ENCODE measurements at regions of chr16 and their contacts with region 1.

Region 1: DNA sequence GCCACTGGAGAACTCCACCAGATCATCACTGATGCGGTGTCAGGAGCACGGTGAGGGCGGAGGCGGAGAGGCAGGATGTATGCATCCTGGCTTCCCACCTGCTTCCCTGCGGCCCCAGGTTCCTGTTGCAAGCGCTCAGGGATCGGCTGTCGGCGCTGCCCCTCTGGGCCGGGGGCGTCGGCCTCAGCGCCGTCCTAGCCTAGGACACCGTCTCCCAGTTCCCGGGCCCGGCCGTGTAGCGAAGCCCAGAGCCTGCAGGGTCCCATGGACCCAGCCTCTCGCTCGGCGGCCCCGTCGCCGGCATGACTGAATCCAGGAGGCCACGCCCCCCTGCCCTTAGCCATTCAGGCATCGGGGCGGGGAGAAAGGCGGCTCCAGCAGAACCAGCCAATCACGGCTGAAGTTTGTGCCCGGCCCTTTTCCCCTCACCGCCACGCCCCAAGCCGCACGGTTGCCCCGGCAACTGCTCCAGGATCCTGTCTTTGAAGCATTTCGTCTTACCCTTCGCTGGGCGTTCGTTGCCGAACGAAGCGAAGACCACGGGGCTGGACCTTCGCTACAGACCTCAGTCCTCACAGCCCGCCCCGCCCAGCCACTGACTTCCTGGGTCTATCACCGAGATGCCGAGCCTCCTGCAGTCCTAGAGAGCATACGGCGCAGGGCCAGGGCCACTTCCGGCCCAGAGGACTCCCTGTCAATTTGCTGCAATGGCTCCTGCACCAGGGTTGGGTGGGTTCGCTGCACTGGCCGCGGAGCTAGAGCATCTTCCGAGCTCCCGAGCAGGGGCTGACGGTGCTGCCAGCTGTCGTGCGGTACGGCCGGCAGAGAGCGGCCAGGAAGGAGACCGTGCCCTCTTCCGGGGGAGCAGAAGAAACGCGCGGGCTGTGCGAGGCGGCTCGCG is 10.6 kb upstream of the ZNF213 start:
- DNase-seq: peak; percentile 92 to 97 (median 96)
- ATAC-seq: peak; percentile 95
- H3K4me3 ChIP-seq: peak overlapping the region; percentile 90
- H3K4me3 Mint-ChIP-seq: peak overlapping the region; percentile 92 to 99 (median 96)
- H3K27ac ChIP-seq: peak overlapping the region; percentile 75
- H3K27ac Mint-ChIP-seq: peak overlapping the region; percentile 85 to 99 (median 97)
- H3K4me1 ChIP-seq: peaks cover 20 to 29% of the 10 kb centered on the region in 2 donors
- H3K4me1 Mint-ChIP-seq: peaks cover 16 to 51% (median 43%) of the 10 kb centered on the region in 7 donors
- H3K27me3 ChIP-seq: no peaks in the 10 kb centered on the region
- H3K27me3 Mint-ChIP-seq: no peaks in the 10 kb centered on the region

Region 2: GRCh38 chr16:3059000-3059722 is 65.1 kb before region 1 on chr16:
- CTCF ChIA-PET with region 1: interaction called, 244 read pairs
- POLR2A ChIA-PET with region 1: interaction called, 182 read pairs
- intact Hi-C with region 1: loop called (anchors 1 kb)
- DNase-seq: peak; percentile 76 to 97 (median 89)
- ATAC-seq: peak; percentile 95
- H3K4me3 ChIP-seq: peak overlapping the region; percentile 77
- H3K4me3 Mint-ChIP-seq: peak overlapping the region; percentile 79 to 95 (median 88)
- H3K27ac ChIP-seq: peak overlapping the region; percentile 89
- H3K27ac Mint-ChIP-seq: peak overlapping the region in 8 of 9 donors; percentile 72 to 91 (median 85)
- H3K4me1 ChIP-seq: peaks cover 25 to 46% of the 10 kb centered on the region in 2 donors
- H3K4me1 Mint-ChIP-seq: peaks cover 39 to 63% (median 47%) of the 10 kb centered on the region in 7 donors
- H3K27me3 ChIP-seq: no peaks in the 10 kb centered on the region
- H3K27me3 Mint-ChIP-seq: no peaks in the 10 kb centered on the region

Region 3: GRCh38 chr16:3074860-3075522 is 49.2 kb before region 1 on chr16:
- CTCF ChIA-PET with region 1: interaction called, 18 read pairs
- POLR2A ChIA-PET with region 1: interaction called, 12 read pairs
- intact Hi-C with region 1: loop called (anchors 1 kb)
- DNase-seq: peak; percentile 44 to 92 (median 90)
- ATAC-seq: peak; percentile 95
- H3K4me3 ChIP-seq: peak overlapping the region; percentile 37
- H3K4me3 Mint-ChIP-seq: peak overlapping the region; percentile 69 to 89 (median 83)
- H3K27ac ChIP-seq: peak overlapping the region; percentile 78
- H3K27ac Mint-ChIP-seq: peak overlapping the region; percentile 92 to 99 (median 99)
- H3K4me1 ChIP-seq: peaks cover 73 to 82% of the 10 kb centered on the region in 2 donors
- H3K4me1 Mint-ChIP-seq: peaks cover 67 to 93% (median 78%) of the 10 kb centered on the region in 7 donors
- H3K27me3 ChIP-seq: no peaks in the 10 kb centered on the region
- H3K27me3 Mint-ChIP-seq: no peaks in the 10 kb centered on the region

Region 4: DNA sequence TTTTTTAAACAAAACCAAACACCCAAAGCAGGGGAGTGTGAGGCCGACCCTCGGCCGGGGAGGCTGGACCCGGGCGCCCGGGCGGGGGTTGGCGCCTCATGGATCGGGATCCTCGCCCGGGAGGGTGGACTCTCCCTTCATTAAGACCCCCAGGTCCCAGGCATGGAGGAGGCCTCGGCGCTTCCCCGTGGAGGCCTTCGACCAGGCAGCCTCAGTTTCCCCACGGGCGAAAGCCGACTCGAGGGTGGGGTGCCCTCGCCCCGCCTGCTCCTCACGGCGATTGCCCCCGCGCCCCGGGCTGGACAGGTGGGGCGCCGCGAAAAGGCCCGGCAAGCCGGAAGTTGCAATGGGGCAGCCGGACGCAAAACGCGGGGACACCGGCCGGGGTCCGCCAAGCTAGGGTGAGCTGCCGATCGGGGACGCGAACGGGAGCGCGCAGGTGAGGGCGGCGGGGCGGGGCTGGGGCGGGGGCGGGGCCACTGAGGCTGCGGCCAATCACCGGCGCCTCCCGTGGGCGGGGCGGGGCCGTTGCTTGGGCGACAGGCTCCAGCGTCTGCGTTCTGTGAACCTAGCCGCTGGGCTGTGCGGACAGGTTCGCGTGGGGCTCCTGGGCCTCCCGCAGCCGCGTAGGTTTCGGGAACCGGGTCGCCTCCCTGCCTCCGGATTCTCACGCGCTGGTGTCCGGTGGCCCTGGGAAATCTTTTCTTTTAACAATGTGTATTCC is 17.9 kb before region 1 on chr16:
- CTCF ChIA-PET with region 1: interaction called, 233 read pairs
- POLR2A ChIA-PET with region 1: interaction called, 40 read pairs
- intact Hi-C with region 1: loop called (anchors 1 kb)
- DNase-seq: peak; percentile 77 to 92 (median 85)
- ATAC-seq: peak; percentile 97
- H3K4me3 ChIP-seq: peak overlapping the region; percentile 76
- H3K4me3 Mint-ChIP-seq: peak overlapping the region; percentile 83 to 94 (median 87)
- H3K27ac ChIP-seq: peak overlapping the region; percentile 89
- H3K27ac Mint-ChIP-seq: peak overlapping the region; percentile 82 to 96 (median 92)
- H3K4me1 ChIP-seq: peaks cover 13 to 23% of the 10 kb centered on the region in 2 donors
- H3K4me1 Mint-ChIP-seq: peaks cover 26 to 45% (median 35%) of the 10 kb centered on the region in 7 donors
- H3K27me3 ChIP-seq: no peaks in the 10 kb centered on the region
- H3K27me3 Mint-ChIP-seq: peaks cover 0 to 7% (median 0%) of the 10 kb centered on the region in 5 donors